IMR-90 (cell line): ENCODE measurements at regions of chr1 and their contacts with region 1.

Region 1: DNA sequence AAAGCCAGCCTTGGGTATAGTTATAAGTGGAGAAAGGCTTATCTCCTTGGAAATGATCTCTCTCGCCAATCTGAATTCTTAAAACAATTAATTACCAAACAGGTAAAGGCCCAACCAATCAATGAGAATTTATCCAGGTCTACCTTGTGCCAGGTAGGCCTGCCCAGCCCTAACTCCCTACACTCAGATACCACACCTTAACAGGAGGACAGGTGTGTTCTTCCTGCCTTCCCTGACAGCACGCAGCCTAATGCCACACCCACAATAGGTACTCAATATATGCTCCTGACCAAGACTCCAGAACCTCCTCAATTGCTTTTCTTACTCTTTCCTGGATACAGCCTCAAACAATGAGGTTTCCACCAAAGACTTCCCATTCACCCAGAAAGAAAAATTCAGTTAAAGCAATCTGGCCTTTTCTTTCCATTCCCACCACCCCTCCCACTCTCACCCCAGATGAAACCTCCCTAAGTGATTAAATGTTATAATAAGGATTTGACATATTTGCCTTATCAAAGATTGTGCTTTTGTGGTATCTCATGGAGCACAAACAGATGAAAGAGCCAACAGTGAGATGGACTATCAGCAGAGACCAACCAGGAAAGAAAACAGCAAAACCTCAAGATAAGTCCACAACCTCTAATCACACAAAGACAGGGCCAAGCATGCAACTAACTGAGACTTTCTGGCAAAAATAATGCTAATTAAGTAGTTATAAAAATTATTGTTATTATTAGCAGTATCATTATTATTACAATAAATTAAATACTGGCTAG is 25.6 kb downstream of the TRABD2B start:
- DNase-seq: no peak
- ATAC-seq: no peak
- H3K4me3 ChIP-seq: no peak overlapping the region
- H3K27ac ChIP-seq: no peak overlapping the region
- H3K4me1 ChIP-seq: no peaks in the 10 kb centered on the region
- H3K27me3 ChIP-seq: no peaks in the 10 kb centered on the region
- CTCF ChIP-seq: no peak
- POLR2A ChIP-seq: no peak
- RAD21 ChIP-seq: no peak

Region 2: GRCh38 chr1:47763591-47764171 is 207.9 kb before region 1 on chr1:
- CTCF ChIA-PET with region 1: no interaction called
- POLR2A ChIA-PET with region 1: no interaction called
- dilution Hi-C with region 1: no loop called
- in situ Hi-C with region 1: no loop called
- intact Hi-C with region 1: no loop called
- DNase-seq: peak; percentile 1
- ATAC-seq: peak; percentile 35; the same call in 1 of the 2 replicates
- H3K4me3 ChIP-seq: no peak overlapping the region
- H3K27ac ChIP-seq: no peak overlapping the region
- H3K4me1 ChIP-seq: no peaks in the 10 kb centered on the region
- H3K27me3 ChIP-seq: peaks cover 3% of the 10 kb centered on the region; the same call in 1 of the 2 replicates
- CTCF ChIP-seq: no peak
- POLR2A ChIP-seq: no peak
- RAD21 ChIP-seq: no peak

Region 3: DNA sequence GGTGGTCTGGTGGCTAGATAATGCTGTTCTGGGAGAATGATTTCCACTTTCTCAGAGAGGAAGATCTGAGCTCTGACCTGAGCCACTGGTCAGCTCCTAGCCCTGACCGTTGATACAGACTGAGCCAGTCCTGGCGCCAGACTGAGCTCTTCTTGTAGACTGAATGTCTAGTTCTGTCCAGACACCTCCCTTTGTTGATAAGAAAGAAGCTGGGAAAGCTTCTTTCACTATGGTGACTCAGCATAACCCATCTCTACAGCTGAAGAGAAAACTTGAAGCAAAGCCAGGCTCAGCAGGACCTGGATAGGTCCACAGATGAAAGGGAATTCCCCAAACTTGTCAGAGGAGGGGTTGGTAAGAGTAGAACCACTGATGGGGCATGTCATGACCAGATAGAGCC is 35.5 kb after region 1 on chr1:
- CTCF ChIA-PET with region 1: no interaction called
- POLR2A ChIA-PET with region 1: no interaction called
- dilution Hi-C with region 1: no loop called
- in situ Hi-C with region 1: no loop called
- intact Hi-C with region 1: loop called (anchors 1 kb)
- DNase-seq: peak; percentile 2
- ATAC-seq: no peak
- H3K4me3 ChIP-seq: no peak overlapping the region
- H3K27ac ChIP-seq: no peak overlapping the region
- H3K4me1 ChIP-seq: no peaks in the 10 kb centered on the region
- H3K27me3 ChIP-seq: no peaks in the 10 kb centered on the region; the same call in 1 of the 2 replicates
- CTCF ChIP-seq: no peak
- POLR2A ChIP-seq: no peak
- RAD21 ChIP-seq: no peak

Region 4: GRCh38 chr1:48530727-48531351 is 559.3 kb after region 1 on chr1:
- CTCF ChIA-PET with region 1: no interaction called
- POLR2A ChIA-PET with region 1: no interaction called
- dilution Hi-C with region 1: no loop called
- in situ Hi-C with region 1: no loop called
- intact Hi-C with region 1: no loop called
- DNase-seq: peak; percentile 29
- ATAC-seq: peak; percentile 81
- H3K4me3 ChIP-seq: no peak overlapping the region
- H3K27ac ChIP-seq: no peak overlapping the region
- H3K4me1 ChIP-seq: peaks cover 1% of the 10 kb centered on the region; the same call in 1 of the 2 replicates
- H3K27me3 ChIP-seq: no peaks in the 10 kb centered on the region
- CTCF ChIP-seq: peak; percentile 53
- POLR2A ChIP-seq: no peak
- RAD21 ChIP-seq: peak; percentile 35